Activated T-helper 2 cell treated with anti-CD3 and anti-CD28 coated beads, Interferon-gamma antibody, Interleukin-2, Interleukin-4, amounts not matched to agents 10 μg/mL and 5 μg/mL and 100 μg/mL, durations not matched to agents 14 hours and 24 hours and 36 hours (primary cell): ENCODE measurements at regions of chr12 and their contacts with region 1.

Region 1: DNA sequence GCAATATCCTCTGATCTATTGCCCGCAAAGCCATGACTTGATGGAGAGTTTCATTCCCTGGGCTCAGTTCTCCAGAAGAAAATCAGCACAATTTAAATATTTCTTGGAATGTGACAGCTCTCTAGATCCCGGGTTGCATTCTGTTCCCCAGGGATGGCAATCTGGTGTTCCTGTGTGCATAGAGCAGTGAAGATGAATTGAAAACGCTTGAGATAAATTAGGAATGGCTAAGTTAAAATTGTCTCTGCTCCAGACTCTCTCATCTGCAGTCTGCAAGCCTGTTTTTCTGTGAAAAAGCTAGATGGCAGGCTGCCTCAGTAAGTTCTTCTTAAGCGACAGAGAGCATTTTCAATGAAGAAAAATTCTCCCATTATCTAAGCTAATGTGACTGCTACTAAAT is 582.5 kb upstream of the MGAT4C start:
- DNase-seq: no peak
- H3K4me3 Mint-ChIP-seq: no peak overlapping the region
- H3K27ac Mint-ChIP-seq: no peak overlapping the region
- H3K4me1 Mint-ChIP-seq: no peaks in the 10 kb centered on the region
- H3K27me3 Mint-ChIP-seq: no peaks in the 10 kb centered on the region

Region 2: DNA sequence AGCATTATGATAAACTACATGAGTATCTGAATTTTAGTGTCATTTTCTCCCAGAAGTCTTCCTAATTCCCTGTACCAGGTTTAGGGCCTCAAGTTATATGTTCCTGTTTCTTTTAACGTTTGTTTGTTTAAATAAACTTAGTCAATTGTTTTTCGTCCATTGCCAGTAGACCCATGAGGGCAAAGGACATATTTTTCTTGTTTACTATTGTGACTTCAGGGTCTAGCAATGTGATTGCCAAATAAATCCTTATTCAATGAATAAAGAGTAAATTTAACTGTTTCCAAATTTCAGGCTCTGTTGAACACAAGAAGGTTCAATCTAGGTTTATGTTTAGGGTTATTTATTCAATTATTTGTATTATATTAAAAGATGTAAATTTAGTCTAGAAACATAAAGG is 190.9 kb before region 1 on chr12:
- intact Hi-C with region 1: no loop called
- DNase-seq: no peak
- H3K4me3 Mint-ChIP-seq: no peak overlapping the region
- H3K27ac Mint-ChIP-seq: no peak overlapping the region
- H3K4me1 Mint-ChIP-seq: no peaks in the 10 kb centered on the region
- H3K27me3 Mint-ChIP-seq: no peaks in the 10 kb centered on the region

Region 3: GRCh38 chr12:86860776-86861175 is 22.1 kb after region 1 on chr12:
- intact Hi-C with region 1: loop called (anchors 2 kb)
- DNase-seq: no peak
- H3K4me3 Mint-ChIP-seq: no peak overlapping the region
- H3K27ac Mint-ChIP-seq: no peak overlapping the region
- H3K4me1 Mint-ChIP-seq: no peaks in the 10 kb centered on the region
- H3K27me3 Mint-ChIP-seq: no peaks in the 10 kb centered on the region

Region 4: DNA sequence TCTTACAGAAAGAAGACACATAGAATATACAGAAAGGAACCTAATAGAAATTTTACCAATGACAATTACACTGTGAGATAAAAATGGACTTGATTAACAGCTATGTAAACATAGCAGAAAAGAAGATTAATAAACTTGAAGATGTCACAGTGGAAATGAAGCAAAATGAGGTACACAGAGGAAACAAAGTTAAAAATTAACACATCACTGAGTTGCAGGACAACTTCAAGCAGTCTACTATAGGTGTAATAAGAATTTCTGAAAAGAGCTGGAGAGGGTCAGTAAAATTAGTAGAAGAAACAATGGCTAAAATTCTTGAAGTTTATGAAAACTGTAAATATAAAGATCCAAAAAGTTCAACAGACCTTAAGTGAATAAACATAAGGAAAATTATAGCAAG is 451.8 kb after region 1 on chr12:
- intact Hi-C with region 1: no loop called
- DNase-seq: no peak
- H3K4me3 Mint-ChIP-seq: no peak overlapping the region
- H3K27ac Mint-ChIP-seq: no peak overlapping the region
- H3K4me1 Mint-ChIP-seq: no peaks in the 10 kb centered on the region
- H3K27me3 Mint-ChIP-seq: no peaks in the 10 kb centered on the region